ENCODE measurements at regions of chr19 and their contacts with region 1.

Region 1: DNA sequence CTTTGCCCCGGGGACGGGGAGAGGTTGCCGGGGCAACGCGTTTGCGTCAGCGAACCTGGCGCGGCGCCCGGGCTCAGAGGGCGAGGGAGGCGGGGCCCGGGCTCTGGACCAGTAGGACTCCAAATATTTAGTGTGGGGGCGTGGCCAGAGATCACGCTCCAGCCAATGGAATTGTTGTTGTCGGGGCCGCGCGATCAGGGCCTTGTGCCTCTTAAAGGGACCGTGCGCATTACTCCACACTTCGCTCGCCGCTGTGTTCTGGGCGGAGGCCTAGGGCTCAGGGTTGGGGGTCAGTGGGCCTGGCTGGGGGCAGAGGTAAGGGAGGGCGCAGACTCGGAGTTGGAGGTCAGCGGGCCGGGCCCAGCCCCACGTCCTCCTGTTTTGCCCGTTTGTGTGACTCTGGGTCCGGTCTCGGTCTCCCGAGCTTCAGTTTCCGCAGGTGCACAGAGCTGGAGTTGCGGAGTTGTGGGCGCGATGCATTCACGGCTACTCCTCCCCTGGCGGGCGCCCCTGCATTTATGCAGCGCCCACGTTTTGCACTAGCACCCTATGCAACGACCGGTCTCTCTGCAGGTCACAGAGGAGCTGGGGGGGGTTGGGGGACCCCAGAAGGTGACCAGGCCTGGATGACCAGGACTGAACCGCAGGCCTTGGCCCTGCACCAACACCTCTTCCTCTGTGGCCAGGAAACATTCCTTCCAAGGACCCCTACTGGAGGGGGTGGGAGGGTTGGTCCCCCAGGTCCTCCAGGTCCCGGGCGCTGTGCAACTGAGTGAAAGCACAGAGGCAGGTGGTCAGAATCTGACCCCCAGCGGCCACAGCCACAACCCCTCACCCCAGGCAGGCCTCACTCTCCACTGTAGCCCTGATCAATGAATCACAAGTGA is 10.7 kb upstream of the MKNK2 start:
- DNase-seq: peak; percentile 100
- ATAC-seq: peak; percentile 91
- H3K4me3 Mint-ChIP-seq: peak overlapping the region; percentile 88
- H3K27ac Mint-ChIP-seq: peak overlapping the region; percentile 92
- H3K4me1 Mint-ChIP-seq: peaks cover 37% of the 10 kb centered on the region
- H3K27me3 Mint-ChIP-seq: no peaks in the 10 kb centered on the region

Region 2: DNA sequence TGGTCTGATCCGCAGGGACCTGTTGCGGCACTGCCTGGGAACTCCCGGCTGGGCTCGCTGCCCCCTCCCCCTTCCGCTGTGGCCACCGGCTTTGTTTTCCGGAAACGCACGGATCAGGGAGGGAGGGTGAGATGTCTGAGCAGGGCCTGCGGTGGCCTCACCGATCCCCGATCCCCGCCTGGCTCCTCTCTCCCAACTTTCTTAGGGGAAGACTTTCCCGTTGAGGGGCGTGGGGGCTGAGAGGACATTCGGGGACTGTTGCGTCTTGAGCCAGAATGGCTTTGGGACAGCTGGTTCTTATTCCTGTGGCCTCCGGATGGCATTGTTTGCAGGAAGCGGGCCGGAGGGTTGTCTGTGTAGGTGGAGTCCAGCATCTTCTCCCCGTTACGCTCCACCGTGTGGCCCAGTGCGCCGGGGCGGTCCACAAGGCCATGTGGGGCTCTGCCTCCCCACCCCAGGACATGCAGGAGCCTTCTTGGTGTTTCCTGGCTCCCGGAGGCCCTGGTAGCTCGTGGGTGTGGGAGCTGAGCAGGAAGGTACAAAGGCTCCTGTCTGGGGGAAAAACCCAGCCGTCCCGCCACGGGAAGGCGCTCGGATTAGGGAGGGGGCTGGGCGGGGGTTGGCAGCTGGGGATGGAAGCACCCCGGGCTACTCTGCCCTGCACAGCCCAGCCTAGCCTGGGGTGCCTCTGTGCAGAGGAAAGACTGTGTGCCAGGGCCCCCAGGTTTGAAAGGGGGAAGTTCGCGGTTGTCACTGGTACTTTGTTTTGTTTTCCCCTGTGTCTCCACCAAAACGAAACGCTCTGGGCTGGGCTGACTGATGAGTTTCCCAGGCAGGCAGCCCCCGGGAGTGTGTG is 119.4 kb before region 1 on chr19:
- CTCF ChIA-PET with region 1: no interaction called
- POLR2A ChIA-PET with region 1: no interaction called
- intact Hi-C with region 1: loop called in 1 of 2 experiments (anchors 1 kb)
- DNase-seq: peak; percentile 85
- ATAC-seq: peak; percentile 50
- H3K4me3 Mint-ChIP-seq: peak overlapping the region; percentile 93
- H3K27ac Mint-ChIP-seq: peak overlapping the region; percentile 88
- H3K4me1 Mint-ChIP-seq: peaks cover 30% of the 10 kb centered on the region
- H3K27me3 Mint-ChIP-seq: no peaks in the 10 kb centered on the region

Region 3: DNA sequence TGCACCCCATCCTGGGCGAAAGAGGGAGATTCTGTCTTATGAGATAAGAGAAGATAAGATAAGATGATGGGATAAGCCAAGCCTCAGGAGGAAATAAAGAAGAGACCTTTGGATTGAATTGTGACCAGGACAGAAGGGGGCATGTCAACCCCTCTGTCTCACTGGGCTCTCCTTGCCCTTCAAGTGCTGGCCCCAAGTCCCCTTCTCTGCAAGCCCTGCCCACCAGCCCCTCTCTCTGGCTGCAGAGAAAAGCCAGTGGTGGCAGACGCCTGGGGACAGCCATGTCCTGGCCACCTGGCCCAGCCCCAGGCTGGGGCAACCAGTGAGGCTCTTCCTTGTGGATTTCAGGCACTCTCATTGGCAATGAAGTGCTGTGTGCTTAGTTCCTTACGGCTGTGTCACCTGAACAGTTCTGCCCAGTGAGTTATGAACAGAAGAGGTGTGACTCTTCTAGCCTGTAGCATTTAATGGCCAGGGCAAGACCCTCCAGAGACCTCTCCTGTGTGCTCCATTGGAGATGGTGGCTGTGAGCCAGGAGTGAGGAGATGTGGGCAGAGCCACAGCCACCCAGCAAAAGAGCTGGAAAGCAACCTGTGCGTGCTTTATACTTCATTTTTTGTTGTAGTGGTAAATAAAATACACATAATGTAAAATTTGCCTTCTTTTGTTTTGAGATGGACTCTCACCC is 40.1 kb before region 1 on chr19:
- CTCF ChIA-PET with region 1: interaction called, 5 read pairs
- POLR2A ChIA-PET with region 1: interaction called, 4 read pairs
- intact Hi-C with region 1: loop called (anchors 1 to 2 kb)
- DNase-seq: no peak
- ATAC-seq: no peak
- H3K4me3 Mint-ChIP-seq: no peak overlapping the region
- H3K27ac Mint-ChIP-seq: no peak overlapping the region
- H3K4me1 Mint-ChIP-seq: peaks cover 7% of the 10 kb centered on the region
- H3K27me3 Mint-ChIP-seq: no peaks in the 10 kb centered on the region

Region 4: GRCh38 chr19:2050991-2051772 is 10.6 kb before region 1 on chr19 and contains the start of gene MKNK2:
- CTCF ChIA-PET with region 1: interaction called, 3 read pairs
- POLR2A ChIA-PET with region 1: interaction called, 4 read pairs
- intact Hi-C with region 1: loop called (anchors 1 kb)
- DNase-seq: peak; percentile 98
- ATAC-seq: peak; percentile 80
- H3K4me3 Mint-ChIP-seq: peak within 1 kb of the TSS; percentile 82
- H3K27ac Mint-ChIP-seq: peak within 1 kb of the TSS; percentile 94
- H3K4me1 Mint-ChIP-seq: peaks cover 51% of the 10 kb centered on the region
- H3K27me3 Mint-ChIP-seq: no peaks in the 10 kb centered on the region
- total RNA-seq, gene MKNK2: 139 to 155 TPM

Region 5: GRCh38 chr19:2269244-2269947 is 207.7 kb after region 1 on chr19:
- CTCF ChIA-PET with region 1: no interaction called
- POLR2A ChIA-PET with region 1: no interaction called
- intact Hi-C with region 1: loop called in 1 of 2 experiments (anchors 1 kb)
- DNase-seq: peak; percentile 99
- ATAC-seq: peak; percentile 81
- H3K4me3 Mint-ChIP-seq: peak overlapping the region; percentile 89
- H3K27ac Mint-ChIP-seq: peak overlapping the region; percentile 88
- H3K4me1 Mint-ChIP-seq: peaks cover 38% of the 10 kb centered on the region
- H3K27me3 Mint-ChIP-seq: no peaks in the 10 kb centered on the region

Region 6: GRCh38 chr19:2775556-2776430 is 714.1 kb after region 1 on chr19:
- CTCF ChIA-PET with region 1: no interaction called
- POLR2A ChIA-PET with region 1: no interaction called
- intact Hi-C with region 1: no loop called
- DNase-seq: peak; percentile 88
- ATAC-seq: peak; percentile 89
- H3K4me3 Mint-ChIP-seq: peak overlapping the region; percentile 54
- H3K27ac Mint-ChIP-seq: peak overlapping the region; percentile 87
- H3K4me1 Mint-ChIP-seq: peaks cover 39% of the 10 kb centered on the region
- H3K27me3 Mint-ChIP-seq: no peaks in the 10 kb centered on the region